ENCODE measurements at regions of chr20 and their contacts with region 1.

Region 1: DNA sequence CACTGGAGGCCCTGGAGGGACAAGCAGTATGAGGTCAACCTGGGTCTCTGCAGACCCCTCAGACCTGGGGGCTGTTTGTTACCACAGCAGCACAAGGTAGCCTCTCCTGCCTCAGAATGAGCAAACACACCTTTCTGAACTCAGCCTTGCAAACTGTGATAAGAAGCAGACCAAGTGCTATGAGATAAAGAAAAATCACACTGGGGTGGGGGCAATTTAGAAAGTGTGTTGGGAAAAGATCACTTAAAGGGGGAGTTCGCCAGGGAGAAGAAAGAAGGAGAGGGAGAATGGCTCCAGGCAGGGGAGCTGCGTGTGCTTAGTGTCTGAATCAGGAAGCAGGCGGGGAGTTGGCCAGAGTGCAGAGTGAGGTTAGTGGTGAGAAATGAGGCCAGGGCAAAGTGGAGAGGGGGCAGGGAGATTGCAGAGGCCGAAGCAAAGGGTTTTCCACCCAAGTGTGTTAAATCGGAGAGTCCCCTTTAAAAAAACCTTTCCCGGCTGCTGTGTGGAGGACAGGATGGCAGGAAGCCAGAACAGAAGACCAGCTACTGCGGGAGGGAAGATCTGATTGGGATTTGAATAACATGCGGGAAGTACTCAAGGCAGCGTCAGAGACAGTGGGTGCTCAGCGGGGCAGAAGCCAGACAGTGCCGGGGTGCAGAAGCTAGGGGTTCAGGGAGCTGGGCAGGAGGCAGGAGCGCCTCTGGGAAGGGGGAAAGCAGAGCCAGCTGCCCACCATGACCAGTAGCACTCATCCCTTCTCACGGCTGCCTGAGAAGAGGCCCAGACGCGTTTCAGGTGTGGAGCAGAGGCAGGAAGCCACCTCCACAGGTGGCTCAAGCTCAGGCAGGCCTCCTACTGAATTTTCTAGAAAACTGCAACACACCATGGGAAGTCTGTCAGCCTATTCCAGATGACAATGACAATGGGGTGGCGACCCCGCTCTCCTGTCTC is 9.0 kb downstream of the ADA start:
- DNase-seq: peak in 8 of 9 donors; percentile 28 to 54 (median 41)
- ATAC-seq: peak; percentile 33
- H3K4me3 ChIP-seq: peak overlapping the region; percentile 47
- H3K4me3 Mint-ChIP-seq: peak overlapping the region; percentile 63 to 96 (median 76)
- H3K27ac ChIP-seq: peak overlapping the region; percentile 76
- H3K27ac Mint-ChIP-seq: peak overlapping the region; percentile 90 to 98 (median 96)
- H3K4me1 ChIP-seq: peaks cover 53 to 70% of the 10 kb centered on the region in 2 donors
- H3K4me1 Mint-ChIP-seq: peaks cover 55 to 82% (median 70%) of the 10 kb centered on the region in 7 donors
- H3K27me3 ChIP-seq: no peaks in the 10 kb centered on the region
- H3K27me3 Mint-ChIP-seq: no peaks in the 10 kb centered on the region

Region 2: DNA sequence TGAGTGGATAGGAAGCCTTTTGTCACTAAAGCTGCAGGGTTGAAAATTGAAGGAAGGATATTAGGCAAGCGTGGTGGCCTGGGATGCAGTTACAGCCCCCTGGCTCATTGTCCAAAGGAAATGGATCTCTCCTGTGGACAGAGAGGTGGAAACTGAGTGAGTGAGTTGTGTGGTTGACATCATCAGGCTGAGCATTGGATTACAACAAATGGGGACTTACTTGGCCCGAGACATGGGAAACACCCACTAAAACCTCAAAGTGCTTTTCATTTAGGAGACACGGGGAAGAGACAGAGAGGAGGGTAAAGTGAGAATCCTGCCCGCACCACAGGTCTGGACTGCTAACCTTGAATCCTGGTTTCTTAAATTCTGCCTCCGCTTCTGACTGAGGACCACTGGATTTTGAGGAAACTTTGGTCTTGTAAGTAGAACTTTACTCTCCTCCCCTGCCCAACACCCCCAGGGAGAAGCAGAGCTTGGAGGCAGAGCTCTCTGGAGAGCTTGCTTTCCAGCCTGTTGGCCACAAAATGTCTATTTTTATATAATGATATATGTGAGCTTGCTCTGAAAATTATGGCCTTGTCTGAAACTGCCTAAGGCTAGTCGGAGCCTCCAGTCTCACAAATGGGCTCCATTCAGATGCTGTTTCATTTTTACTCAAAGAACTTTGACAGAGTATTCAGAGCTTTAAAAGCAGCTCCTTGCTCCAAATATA is 60.0 kb before region 1 on chr20 and contains the start of gene PKIG:
- CTCF ChIA-PET with region 1: no interaction called
- POLR2A ChIA-PET with region 1: no interaction called
- intact Hi-C with region 1: no loop called
- DNase-seq: no peak
- ATAC-seq: no peak
- H3K4me3 ChIP-seq: no peak within 1 kb of the TSS
- H3K4me3 Mint-ChIP-seq: no peak within 1 kb of the TSS
- H3K27ac ChIP-seq: no peak within 1 kb of the TSS
- H3K27ac Mint-ChIP-seq: no peak within 1 kb of the TSS
- H3K4me1 ChIP-seq: no peaks in the 10 kb centered on the region
- H3K4me1 Mint-ChIP-seq: peaks cover 0 to 19% (median 0%) of the 10 kb centered on the region in 7 donors
- H3K27me3 ChIP-seq: no peaks in the 10 kb centered on the region
- H3K27me3 Mint-ChIP-seq: no peaks in the 10 kb centered on the region
- total RNA-seq, gene PKIG: 1.9 to 6.0 (median 2.9) TPM

Region 3: DNA sequence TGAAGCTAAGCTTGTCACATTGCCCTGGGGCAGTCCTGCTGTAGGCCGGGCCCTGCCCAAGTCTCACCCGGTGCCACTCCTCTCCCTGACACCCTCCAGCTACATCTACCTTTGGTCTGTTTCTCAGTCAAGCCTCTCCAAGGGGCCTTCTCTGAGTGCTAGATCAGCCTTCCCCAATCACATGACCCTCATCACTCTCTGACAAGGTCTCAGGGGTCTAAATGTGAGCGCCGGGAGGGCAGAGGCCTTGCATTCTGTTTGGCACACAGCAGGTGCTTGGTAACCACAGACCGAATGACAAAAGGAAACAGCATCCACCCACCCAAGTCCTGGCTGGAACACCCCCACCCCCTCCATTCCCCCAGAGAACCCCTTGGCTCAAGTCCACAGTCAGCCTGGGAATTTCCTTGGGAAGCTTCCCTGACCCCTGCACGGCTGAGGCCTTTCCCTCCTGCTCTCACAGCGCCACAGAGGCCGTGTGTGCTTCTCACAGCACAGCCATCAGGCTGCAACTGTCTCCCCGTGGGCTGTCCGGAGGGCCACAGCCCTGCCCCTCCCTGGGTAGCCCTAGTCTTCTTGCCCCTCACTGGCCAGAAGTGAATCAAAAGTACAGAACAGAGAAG is 27.2 kb before region 1 on chr20:
- CTCF ChIA-PET with region 1: interaction called, 4 read pairs
- POLR2A ChIA-PET with region 1: interaction called, 122 read pairs
- intact Hi-C with region 1: loop called in 1 of 2 experiments (anchors 1 kb)
- DNase-seq: peak in 1 of 9 donors; percentile 11
- ATAC-seq: no peak
- H3K4me3 ChIP-seq: no peak overlapping the region
- H3K4me3 Mint-ChIP-seq: peak overlapping the region; percentile 18 to 77 (median 70)
- H3K27ac ChIP-seq: peak overlapping the region; percentile 42
- H3K27ac Mint-ChIP-seq: peak overlapping the region; percentile 82 to 98 (median 95)
- H3K4me1 ChIP-seq: peaks cover 11 to 64% of the 10 kb centered on the region in 2 donors
- H3K4me1 Mint-ChIP-seq: peaks cover 46 to 81% (median 68%) of the 10 kb centered on the region in 7 donors
- H3K27me3 ChIP-seq: no peaks in the 10 kb centered on the region
- H3K27me3 Mint-ChIP-seq: no peaks in the 10 kb centered on the region

Region 4: DNA sequence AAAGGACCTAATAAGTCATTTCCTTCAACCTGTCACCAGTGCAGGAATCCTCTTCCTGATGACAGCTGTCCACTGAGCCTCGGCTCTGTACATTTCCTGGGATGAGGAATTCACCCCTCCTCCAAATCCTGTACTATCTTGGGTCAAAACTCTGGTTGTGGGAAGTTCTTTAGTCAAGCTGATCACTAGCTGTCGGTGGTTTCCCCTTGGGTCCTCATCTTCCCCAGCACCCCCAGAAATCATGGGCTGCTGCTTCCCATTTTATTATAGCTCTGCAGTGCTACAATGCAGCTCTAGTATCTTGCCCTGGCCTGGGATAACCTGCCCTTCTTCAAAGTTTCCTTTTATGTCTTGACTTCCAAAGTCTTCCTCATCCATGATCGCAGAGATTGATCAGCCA is 23.6 kb after region 1 on chr20:
- CTCF ChIA-PET with region 1: no interaction called
- POLR2A ChIA-PET with region 1: interaction called, 8 read pairs
- intact Hi-C with region 1: loop called in 1 of 2 experiments (anchors 1 kb)
- DNase-seq: no peak
- ATAC-seq: no peak
- H3K4me3 ChIP-seq: no peak overlapping the region
- H3K4me3 Mint-ChIP-seq: no peak overlapping the region
- H3K27ac ChIP-seq: no peak overlapping the region
- H3K27ac Mint-ChIP-seq: peak overlapping the region in 2 of 9 donors; percentile 5 to 56
- H3K4me1 ChIP-seq: peaks cover 0 to 7% of the 10 kb centered on the region in 2 donors
- H3K4me1 Mint-ChIP-seq: peaks cover 12 to 29% (median 20%) of the 10 kb centered on the region in 7 donors
- H3K27me3 ChIP-seq: no peaks in the 10 kb centered on the region
- H3K27me3 Mint-ChIP-seq: no peaks in the 10 kb centered on the region

Region 5: DNA sequence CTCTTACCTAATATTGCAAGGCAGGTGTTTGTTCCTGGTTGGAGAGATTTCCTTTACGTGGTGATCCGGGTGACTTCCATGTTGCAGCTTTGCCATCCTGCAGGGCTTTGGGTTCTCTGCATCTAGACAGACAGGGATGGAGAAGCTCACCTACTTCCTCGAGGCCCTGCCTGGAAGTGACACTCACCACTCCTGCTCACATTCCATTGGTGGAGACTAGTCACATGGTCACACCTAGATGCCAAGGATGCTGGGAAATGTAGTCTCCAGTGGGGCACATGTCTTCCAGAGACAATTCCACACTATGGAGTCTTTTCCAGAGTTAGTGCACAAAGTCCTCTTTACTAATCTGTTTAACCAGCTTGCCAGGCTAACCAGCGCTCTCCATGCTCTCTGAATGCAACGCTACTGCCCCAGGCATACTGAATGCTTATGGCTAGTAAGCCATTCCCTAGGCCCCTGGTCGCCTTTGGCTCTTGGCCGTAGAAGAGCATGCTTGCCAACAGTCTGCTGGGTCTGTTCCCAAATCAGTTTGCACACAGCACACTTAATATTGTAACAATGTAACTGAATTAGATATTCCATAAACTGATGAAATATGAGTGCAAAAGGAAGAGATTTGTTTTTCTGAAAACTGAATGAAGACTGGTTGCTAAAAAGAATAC is 96.5 kb after region 1 on chr20:
- CTCF ChIA-PET with region 1: no interaction called
- POLR2A ChIA-PET with region 1: no interaction called
- intact Hi-C with region 1: no loop called
- DNase-seq: peak in 7 of 9 donors; percentile 19 to 61 (median 45)
- ATAC-seq: peak; percentile 63
- H3K4me3 ChIP-seq: no peak overlapping the region
- H3K4me3 Mint-ChIP-seq: peak overlapping the region in 5 of 10 donors; percentile 24 to 84 (median 37)
- H3K27ac ChIP-seq: no peak overlapping the region
- H3K27ac Mint-ChIP-seq: peak overlapping the region in 3 of 9 donors; percentile 14 to 50 (median 46)
- H3K4me1 ChIP-seq: no peaks in the 10 kb centered on the region
- H3K4me1 Mint-ChIP-seq: peaks cover 11 to 25% (median 21%) of the 10 kb centered on the region in 7 donors
- H3K27me3 ChIP-seq: no peaks in the 10 kb centered on the region
- H3K27me3 Mint-ChIP-seq: peaks cover 0 to 15% (median 0%) of the 10 kb centered on the region in 5 donors

Region 6: DNA sequence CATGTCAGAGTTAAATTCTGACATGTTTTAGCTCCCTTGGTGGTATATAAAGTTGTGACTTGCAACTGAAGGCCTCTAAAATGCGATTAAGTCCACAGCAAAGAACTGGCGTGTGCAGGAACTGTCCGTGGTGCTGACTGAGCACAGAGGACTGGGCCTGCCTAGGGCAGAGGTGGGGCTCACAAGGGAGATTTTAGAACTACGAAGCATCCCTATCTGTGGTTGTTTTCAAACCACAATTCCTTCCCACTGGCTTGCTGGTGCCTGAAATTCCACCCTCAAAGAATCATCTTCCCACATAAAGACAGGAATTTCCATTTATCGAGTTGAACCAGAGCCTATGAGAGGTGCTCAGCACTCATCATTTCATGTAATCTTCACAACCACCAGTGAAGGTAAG is 137.7 kb after region 1 on chr20:
- CTCF ChIA-PET with region 1: no interaction called
- POLR2A ChIA-PET with region 1: no interaction called
- intact Hi-C with region 1: no loop called
- DNase-seq: peak in 5 of 9 donors; percentile 15 to 44 (median 32)
- ATAC-seq: no peak
- H3K4me3 ChIP-seq: no peak overlapping the region
- H3K4me3 Mint-ChIP-seq: no peak overlapping the region
- H3K27ac ChIP-seq: no peak overlapping the region
- H3K27ac Mint-ChIP-seq: no peak overlapping the region
- H3K4me1 ChIP-seq: no peaks in the 10 kb centered on the region
- H3K4me1 Mint-ChIP-seq: no peaks in the 10 kb centered on the region
- H3K27me3 ChIP-seq: peaks cover 0 to 3% of the 10 kb centered on the region in 2 donors
- H3K27me3 Mint-ChIP-seq: peaks cover 3 to 27% (median 26%) of the 10 kb centered on the region in 5 donors

Measured in naive thymus-derived CD4-positive, alpha-beta T cell (primary cell).